ENCODE measurements at regions of chr3 and their contacts with region 1.

Region 1: DNA sequence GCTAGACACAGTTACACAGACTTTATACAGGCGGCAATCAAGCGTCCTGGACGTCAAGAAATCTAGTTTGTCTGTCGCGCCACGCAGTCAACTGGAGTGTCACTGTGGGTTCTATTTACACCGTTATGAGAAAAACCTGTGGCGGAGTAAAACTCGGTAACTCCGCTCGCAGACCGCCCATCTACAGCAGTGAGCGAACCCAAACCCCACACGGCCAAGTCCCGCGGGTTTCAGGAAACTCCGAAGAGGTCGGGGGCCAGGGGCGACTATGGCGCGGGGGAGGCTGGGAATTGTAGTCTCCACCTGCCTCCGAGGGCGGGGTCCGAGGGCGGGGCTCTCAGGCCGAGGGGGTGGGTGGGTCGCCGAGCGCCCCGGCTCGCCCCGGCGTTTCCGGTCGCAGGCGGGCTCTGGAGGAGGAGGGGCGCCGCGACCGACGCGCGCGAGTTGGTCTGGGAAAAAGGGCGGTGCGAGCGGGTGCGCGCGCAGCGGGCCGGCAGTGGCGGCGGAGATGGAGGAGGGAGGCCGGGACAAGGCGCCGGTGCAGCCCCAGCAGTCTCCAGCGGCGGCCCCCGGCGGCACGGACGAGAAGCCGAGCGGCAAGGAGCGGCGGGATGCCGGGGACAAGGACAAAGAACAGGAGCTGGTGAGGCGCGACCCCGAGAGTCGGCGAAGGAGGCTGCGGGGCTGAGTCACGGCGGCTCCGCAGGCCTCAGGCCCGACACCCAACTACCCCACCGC is at the start of gene PSMD2:
- DNase-seq: peak; percentile 99
- H3K4me3 Mint-ChIP-seq: peak within 1 kb of the TSS; percentile 93
- H3K27ac Mint-ChIP-seq: peak within 1 kb of the TSS; percentile 82
- H3K4me1 Mint-ChIP-seq: peaks cover 21% of the 10 kb centered on the region
- H3K27me3 Mint-ChIP-seq: no peaks in the 10 kb centered on the region
- total RNA-seq, gene PSMD2: 246 to 257 TPM

Region 2: GRCh38 chr3:183635431-183636220 is 663.3 kb before region 1 on chr3 and contains the start of gene KLHL24:
- CTCF ChIA-PET with region 1: no interaction called
- POLR2A ChIA-PET with region 1: no interaction called
- intact Hi-C with region 1: loop called (anchors 5 kb)
- DNase-seq: peak; percentile 95
- H3K4me3 Mint-ChIP-seq: peak within 1 kb of the TSS; percentile 92
- H3K27ac Mint-ChIP-seq: peak within 1 kb of the TSS; percentile 88
- H3K4me1 Mint-ChIP-seq: peaks cover 28% of the 10 kb centered on the region
- H3K27me3 Mint-ChIP-seq: no peaks in the 10 kb centered on the region
- total RNA-seq, gene KLHL24: 15.6 to 19.5 TPM

Region 3: GRCh38 chr3:183884427-183885296 is 414.3 kb before region 1 on chr3 and contains the start of gene PARL:
- CTCF ChIA-PET with region 1: no interaction called
- POLR2A ChIA-PET with region 1: no interaction called
- intact Hi-C with region 1: loop called (anchors 5 kb)
- DNase-seq: peak; percentile 98
- H3K4me3 Mint-ChIP-seq: peak within 1 kb of the TSS; percentile 92
- H3K27ac Mint-ChIP-seq: peak within 1 kb of the TSS; percentile 86
- H3K4me1 Mint-ChIP-seq: peaks cover 31% of the 10 kb centered on the region
- H3K27me3 Mint-ChIP-seq: no peaks in the 10 kb centered on the region
- total RNA-seq, gene PARL: 77.1 to 84.1 TPM

Region 4: GRCh38 chr3:184174646-184175492 is 124.1 kb before region 1 on chr3 and contains the start of gene AP2M1:
- CTCF ChIA-PET with region 1: no interaction called
- POLR2A ChIA-PET with region 1: no interaction called
- intact Hi-C with region 1: loop called (anchors 1 kb)
- DNase-seq: peak; percentile 99
- H3K4me3 Mint-ChIP-seq: peak within 1 kb of the TSS; percentile 98
- H3K27ac Mint-ChIP-seq: peak within 1 kb of the TSS; percentile 67
- H3K4me1 Mint-ChIP-seq: peaks cover 25% of the 10 kb centered on the region
- H3K27me3 Mint-ChIP-seq: no peaks in the 10 kb centered on the region
- total RNA-seq, gene AP2M1: 218 to 221 TPM

Region 5: DNA sequence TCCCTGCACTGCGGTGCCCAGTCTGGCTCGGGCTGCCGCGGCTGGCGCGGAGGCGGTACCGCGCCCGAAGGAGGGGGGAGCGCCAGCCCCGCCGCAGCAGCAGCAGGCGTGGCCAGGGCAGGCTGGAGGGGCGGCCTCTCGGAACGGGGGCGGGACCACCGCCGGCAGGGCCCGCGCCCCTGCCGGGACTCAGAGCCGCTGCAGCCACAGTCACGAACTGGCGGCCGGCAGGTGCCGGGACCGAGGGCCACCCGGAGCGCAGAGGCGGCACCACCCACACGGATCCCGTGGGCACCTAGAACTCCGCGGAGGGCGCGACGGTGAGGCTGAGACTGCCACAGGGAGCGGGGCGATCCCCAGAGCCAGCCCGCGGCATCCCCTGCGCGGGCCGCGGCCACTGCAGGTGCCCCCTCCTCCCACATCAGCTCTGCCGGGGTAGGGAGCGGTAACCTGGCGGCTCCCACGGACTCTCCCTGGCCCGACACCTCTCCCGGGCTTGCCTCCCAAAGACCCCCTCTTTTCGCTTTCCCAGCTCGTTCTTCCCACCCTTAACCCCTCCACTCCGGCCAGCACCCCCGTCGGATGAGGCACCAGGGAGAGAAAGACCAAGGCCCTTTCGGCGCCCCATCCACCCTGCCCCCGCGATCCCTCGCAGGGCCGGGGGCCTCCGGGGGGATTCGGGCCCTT is 69.4 kb before region 1 on chr3 and contains the start of gene VWA5B2:
- CTCF ChIA-PET with region 1: interaction called, 17 read pairs
- POLR2A ChIA-PET with region 1: no interaction called
- intact Hi-C with region 1: no loop called
- DNase-seq: peak; percentile 73
- H3K4me3 Mint-ChIP-seq: peak within 1 kb of the TSS; percentile 49
- H3K27ac Mint-ChIP-seq: no peak within 1 kb of the TSS
- H3K4me1 Mint-ChIP-seq: peaks cover 9% of the 10 kb centered on the region
- H3K27me3 Mint-ChIP-seq: peaks cover 45% of the 10 kb centered on the region
- total RNA-seq, gene VWA5B2: not detected

Region 6: DNA sequence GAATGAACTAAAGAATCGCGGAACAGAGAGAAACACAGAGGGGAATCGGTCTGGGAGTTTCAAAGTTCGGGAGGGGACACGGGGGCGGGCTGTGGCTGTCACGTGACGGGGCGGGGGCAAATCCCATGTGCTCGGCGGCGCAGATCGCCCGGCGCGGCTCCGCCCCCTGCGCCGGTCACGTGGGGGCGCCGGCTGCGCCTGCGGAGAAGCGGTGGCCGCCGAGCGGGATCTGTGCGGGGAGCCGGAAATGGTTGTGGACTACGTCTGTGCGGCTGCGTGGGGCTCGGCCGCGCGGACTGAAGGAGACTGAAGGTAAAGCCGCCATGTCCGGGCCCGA is 15.4 kb after region 1 on chr3 and contains the start of gene EIF4G1:
- CTCF ChIA-PET with region 1: interaction called, 5 read pairs
- POLR2A ChIA-PET with region 1: interaction called, 3 read pairs
- intact Hi-C with region 1: loop called (anchors 1 kb)
- DNase-seq: peak; percentile 95
- H3K4me3 Mint-ChIP-seq: peak within 1 kb of the TSS; percentile 86
- H3K27ac Mint-ChIP-seq: peak within 1 kb of the TSS; percentile 93
- H3K4me1 Mint-ChIP-seq: peaks cover 29% of the 10 kb centered on the region
- H3K27me3 Mint-ChIP-seq: no peaks in the 10 kb centered on the region
- total RNA-seq, gene EIF4G1: 410 to 432 TPM

Region 7: DNA sequence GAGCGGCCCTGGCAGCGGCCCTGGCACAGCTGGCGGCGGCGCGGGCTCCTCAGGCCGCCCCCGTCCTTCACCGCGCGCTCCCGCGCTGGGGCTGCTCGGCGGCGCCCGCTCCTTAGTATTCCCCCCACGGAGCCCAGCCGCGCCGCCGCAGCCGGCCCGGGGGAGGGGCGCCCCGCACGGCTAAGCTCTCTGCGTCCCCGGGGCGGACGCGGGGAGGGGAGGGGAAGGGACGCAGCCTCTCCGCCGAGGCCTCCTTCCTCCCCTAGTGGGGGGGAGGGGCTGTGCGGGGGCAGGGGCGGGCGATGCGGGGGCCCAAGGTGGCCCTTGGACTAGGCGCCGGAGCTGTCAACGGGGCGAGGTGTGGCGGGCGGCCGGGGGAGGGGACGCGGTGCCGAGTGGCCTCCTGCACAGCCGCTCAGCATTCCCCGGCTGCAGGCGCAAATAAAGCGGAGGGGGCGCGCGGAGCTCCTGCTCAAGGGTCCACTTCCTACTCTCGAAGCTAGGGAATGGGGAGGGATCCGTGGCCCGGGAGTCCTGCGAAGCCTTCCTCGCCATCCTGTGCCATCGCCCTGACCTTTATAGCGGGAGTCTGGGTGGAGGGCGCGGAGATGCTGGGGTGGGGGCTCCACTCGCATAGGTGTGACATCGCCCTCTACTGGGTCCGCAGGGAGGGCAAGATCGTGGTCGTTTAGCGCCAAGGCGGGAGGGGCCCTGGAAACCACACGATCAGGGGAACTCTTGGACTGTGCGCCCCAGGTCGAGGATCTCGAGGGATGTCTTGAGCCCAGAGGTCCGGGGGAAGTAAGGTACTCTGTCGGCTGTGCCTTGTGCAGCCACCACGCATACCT is 284.9 kb after region 1 on chr3:
- CTCF ChIA-PET with region 1: no interaction called
- POLR2A ChIA-PET with region 1: no interaction called
- intact Hi-C with region 1: no loop called
- DNase-seq: no peak
- H3K4me3 Mint-ChIP-seq: no peak overlapping the region
- H3K27ac Mint-ChIP-seq: no peak overlapping the region
- H3K4me1 Mint-ChIP-seq: peaks cover 4% of the 10 kb centered on the region
- H3K27me3 Mint-ChIP-seq: peaks cover 14% of the 10 kb centered on the region